ENCODE measurements at regions of chrX and their contacts with region 1.

Region 1: GRCh38 chrX:150324035-150324728 is 38.9 kb upstream of the MAMLD1 start:
- DNase-seq: no peak
- H3K4me3 ChIP-seq: no peak overlapping the region
- H3K27ac ChIP-seq: no peak overlapping the region
- H3K4me1 ChIP-seq: no peaks in the 10 kb centered on the region
- H3K27me3 ChIP-seq: no peaks in the 10 kb centered on the region
- CTCF ChIP-seq: no peak
- EP300 ChIP-seq: no peak
- POLR2A ChIP-seq: no peak

Region 2: GRCh38 chrX:149799938-149800337 is 524.2 kb before region 1 on chrX:
- in situ Hi-C with region 1: no loop called
- intact Hi-C with region 1: no loop called
- DNase-seq: no peak
- H3K4me3 ChIP-seq: no peak overlapping the region
- H3K27ac ChIP-seq: no peak overlapping the region
- H3K4me1 ChIP-seq: no peaks in the 10 kb centered on the region
- H3K27me3 ChIP-seq: no peaks in the 10 kb centered on the region
- CTCF ChIP-seq: no peak
- EP300 ChIP-seq: no peak
- POLR2A ChIP-seq: no peak

Region 3: GRCh38 chrX:150200820-150201287 is 123.3 kb before region 1 on chrX:
- in situ Hi-C with region 1: loop called in 1 of 4 experiments (anchors 25 kb)
- intact Hi-C with region 1: no loop called
- DNase-seq: peak; percentile 20
- H3K4me3 ChIP-seq: no peak overlapping the region
- H3K27ac ChIP-seq: no peak overlapping the region
- H3K4me1 ChIP-seq: no peaks in the 10 kb centered on the region
- H3K27me3 ChIP-seq: no peaks in the 10 kb centered on the region
- CTCF ChIP-seq: no peak
- EP300 ChIP-seq: no peak
- POLR2A ChIP-seq: no peak

Region 4: DNA sequence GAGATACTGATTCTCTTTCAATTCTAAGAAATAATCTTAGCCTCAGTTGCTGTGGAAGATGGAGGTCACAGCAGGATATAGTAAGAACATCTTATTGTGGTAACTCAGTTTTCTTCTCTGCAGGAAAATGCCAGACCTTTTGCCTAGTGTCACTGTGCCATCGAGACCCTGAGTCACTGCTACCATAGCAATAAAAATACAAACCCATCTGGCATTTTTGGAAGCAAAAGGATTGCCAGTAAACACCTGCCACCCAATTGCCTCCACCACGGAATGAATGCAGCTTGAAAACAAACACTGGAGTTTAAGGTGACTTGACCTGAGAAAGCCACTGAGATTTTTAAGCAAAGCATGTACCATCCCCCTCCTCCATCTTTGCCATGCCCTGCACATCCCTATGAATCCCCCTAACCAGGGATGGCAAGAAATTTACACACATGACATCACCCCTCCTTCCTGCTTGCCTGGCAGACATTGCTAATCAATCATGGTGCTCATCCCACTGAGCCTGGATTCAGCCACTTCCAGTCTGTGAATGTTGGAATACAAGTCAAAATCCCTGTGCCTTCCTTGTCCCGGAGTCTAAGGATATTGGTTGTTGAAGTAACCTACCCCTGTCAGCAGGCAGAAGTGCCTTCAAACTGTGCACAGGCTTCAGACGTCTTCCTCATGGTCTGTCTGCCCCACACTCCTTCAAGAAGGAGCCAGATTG is 20.6 kb before region 1 on chrX:
- in situ Hi-C with region 1: no loop called
- intact Hi-C with region 1: no loop called
- DNase-seq: no peak
- H3K4me3 ChIP-seq: no peak overlapping the region
- H3K27ac ChIP-seq: no peak overlapping the region
- H3K4me1 ChIP-seq: no peaks in the 10 kb centered on the region
- H3K27me3 ChIP-seq: no peaks in the 10 kb centered on the region
- CTCF ChIP-seq: no peak
- EP300 ChIP-seq: no peak
- POLR2A ChIP-seq: no peak

Region 5: DNA sequence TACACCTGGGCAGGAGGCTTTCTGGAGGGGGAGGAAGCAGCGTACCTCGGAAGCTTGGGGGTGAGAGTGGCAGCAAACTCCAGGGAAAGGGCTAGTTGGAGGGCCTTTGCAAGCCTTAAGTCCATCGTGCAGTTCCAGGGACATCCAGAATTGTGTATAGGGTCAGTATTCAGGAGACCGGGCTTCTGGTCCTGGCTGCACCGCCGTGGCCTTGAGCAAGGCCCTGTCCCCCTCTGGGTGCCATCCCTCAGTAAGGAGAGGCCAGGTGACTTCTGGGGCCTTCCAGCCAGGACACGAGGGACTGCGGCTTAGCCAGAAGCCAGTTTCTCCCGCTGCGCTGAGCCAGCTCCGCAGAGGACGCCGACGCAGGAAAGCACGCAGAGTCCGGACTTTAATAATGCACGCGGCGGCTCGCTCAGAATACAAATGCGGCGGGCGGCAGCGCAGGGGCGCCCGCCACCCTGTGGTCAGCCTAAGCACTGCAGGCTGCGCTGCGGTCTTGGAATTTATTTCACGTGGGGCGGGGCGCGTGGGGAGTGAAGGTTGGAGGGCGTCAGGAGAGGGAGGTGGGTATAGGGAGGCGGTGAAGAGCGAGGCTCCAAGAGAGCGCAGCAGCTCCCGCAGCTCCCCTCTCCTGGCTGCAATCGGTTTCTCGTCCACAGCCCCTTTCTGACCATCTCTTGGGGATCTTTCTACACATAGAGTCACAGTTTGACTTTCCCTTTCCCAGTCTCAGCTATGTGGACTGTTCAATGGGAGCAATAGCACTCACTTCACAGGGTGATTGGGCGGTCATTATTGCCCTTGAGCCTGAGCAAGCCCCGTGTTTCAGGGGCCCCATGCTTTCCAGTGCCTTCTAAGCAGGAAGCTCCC is 758.1 kb after region 1 on chrX:
- in situ Hi-C with region 1: no loop called
- intact Hi-C with region 1: no loop called
- DNase-seq: peak; percentile 53
- H3K4me3 ChIP-seq: no peak overlapping the region
- H3K27ac ChIP-seq: no peak overlapping the region
- H3K4me1 ChIP-seq: peaks cover 0 to 7% (median 1%) of the 10 kb centered on the region in 4 donors
- H3K27me3 ChIP-seq: no peaks in the 10 kb centered on the region
- CTCF ChIP-seq: peak; percentile 87 to 90 (median 87)
- EP300 ChIP-seq: no peak
- POLR2A ChIP-seq: no peak